CD8-positive, alpha-beta T cell (primary cell): ENCODE measurements at regions of chrX and their contacts with region 1.

Region 1: DNA sequence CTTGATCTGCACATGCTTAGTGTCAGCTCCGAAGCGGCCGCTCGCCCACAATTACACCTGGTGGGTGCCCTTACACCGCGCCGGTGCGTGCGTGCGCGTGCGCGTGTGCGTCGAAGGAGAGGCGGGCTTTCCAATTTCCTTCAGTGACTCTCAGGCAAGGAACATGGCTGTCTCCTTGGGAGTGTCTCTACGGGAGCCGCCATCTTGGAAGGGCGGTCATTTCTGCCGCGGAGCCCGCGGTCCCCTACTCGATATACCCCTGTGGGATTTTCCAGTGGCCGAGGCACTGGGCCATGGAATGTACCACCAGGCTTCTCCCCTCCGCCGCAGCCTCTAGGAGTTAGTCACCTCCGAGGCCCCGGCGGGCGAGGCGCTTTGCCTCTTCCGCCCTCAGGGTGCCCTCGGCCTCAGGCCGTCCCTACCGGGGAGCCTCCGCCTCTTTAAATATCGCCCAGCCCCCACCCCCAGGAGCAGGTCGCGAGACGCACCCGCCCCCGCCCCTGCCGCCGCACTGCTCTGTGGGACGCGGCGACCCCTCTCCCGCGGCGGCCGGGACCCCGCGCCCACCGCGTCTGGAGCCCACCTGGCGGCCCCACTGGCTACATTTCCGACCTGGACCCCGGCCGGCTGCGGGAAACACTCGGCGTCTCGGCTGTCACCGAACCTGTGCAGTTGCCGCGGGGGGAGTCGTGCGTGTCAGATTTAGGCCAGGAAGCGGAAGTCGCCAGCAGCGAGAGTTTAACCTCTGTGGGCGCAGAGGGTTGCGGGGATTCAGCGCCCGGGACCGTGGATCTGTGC is at the start of gene ZNF41:
- DNase-seq: peak; percentile 60 to 92 (median 79)
- ATAC-seq: peak; percentile 83
- H3K4me3 ChIP-seq: peak within 1 kb of the TSS; percentile 81 to 86
- H3K4me3 Mint-ChIP-seq: peak within 1 kb of the TSS; percentile 94
- H3K27ac ChIP-seq: peak within 1 kb of the TSS; percentile 81 to 88
- H3K27ac Mint-ChIP-seq: peak within 1 kb of the TSS; percentile 99
- H3K4me1 ChIP-seq: peaks cover 18% of the 10 kb centered on the region
- H3K4me1 Mint-ChIP-seq: peaks cover 42% of the 10 kb centered on the region
- H3K27me3 ChIP-seq: no peaks in the 10 kb centered on the region
- H3K27me3 Mint-ChIP-seq: no peaks in the 10 kb centered on the region
- CTCF ChIP-seq: no peak
- total RNA-seq, gene ZNF41: 2.9 to 4.9 TPM

Region 2: GRCh38 chrX:47129157-47129898 is 353.4 kb before region 1 on chrX:
- CTCF ChIA-PET with region 1: no interaction called
- POLR2A ChIA-PET with region 1: no interaction called
- intact Hi-C with region 1: loop called in 1 of 2 experiments (anchors 2 kb)
- DNase-seq: peak; percentile 76 to 95 (median 86)
- ATAC-seq: peak; percentile 98
- H3K4me3 ChIP-seq: peak overlapping the region; percentile 74 to 80
- H3K4me3 Mint-ChIP-seq: peak overlapping the region; percentile 97
- H3K27ac ChIP-seq: peak overlapping the region; percentile 73 to 85
- H3K27ac Mint-ChIP-seq: peak overlapping the region; percentile 98
- H3K4me1 ChIP-seq: no peaks in the 10 kb centered on the region
- H3K4me1 Mint-ChIP-seq: peaks cover 4% of the 10 kb centered on the region
- H3K27me3 ChIP-seq: no peaks in the 10 kb centered on the region
- H3K27me3 Mint-ChIP-seq: no peaks in the 10 kb centered on the region
- CTCF ChIP-seq: no peak

Region 3: DNA sequence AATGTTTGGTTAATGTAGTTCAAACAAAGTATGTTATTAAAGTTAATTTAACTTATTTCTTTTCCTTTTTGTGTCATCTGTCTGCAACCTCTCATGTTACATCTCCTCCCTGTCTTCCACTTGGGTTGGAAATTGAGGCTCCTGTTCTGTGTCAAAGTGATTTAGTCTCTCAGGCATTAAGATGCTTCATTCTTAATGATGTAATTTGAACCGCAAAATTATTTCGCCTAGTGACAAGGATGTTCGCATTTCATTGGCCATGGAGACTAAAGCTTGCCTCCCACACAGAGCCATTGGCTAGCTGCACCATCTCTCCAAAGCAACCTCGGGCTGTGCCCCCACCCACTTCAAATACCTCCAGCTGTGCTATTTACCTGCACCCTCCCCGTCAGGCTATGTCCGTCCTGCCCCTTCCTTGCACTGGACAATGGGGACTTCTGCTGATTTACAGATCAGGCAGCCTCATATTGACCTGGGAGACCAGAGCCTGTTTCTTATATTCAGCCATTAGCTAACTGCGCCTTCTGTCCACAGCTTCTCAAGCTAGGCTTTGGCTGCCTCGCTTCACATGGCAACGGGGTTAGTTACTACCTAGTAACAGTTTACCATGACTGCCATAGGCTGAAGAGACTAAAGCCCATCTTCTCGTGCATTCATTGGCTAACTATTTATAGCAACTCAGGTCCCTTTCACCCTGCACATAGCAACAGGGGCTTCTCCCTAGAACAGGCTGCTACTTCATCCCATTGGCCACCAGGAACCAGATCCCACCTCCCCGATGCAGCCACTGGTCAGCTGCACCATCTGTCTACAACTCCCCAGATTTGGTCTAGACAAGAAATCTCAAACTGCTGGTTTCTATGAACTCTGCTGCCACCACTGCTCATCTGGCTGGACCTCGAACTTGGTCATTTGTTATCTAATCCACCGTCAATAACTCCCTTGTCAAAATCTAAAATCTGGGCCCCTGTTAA is 120.9 kb before region 1 on chrX:
- CTCF ChIA-PET with region 1: no interaction called
- POLR2A ChIA-PET with region 1: interaction called, 3 read pairs
- intact Hi-C with region 1: loop called in 1 of 2 experiments (anchors 1 kb)
- DNase-seq: peak in 8 of 9 experiments; percentile 5 to 83 (median 28)
- ATAC-seq: peak; percentile 55
- H3K4me3 ChIP-seq: peak overlapping the region in 1 of 2 experiments; percentile 20
- H3K4me3 Mint-ChIP-seq: peak overlapping the region; percentile 58
- H3K27ac ChIP-seq: peak overlapping the region in 1 of 2 experiments; percentile 83
- H3K27ac Mint-ChIP-seq: peak overlapping the region; percentile 85
- H3K4me1 ChIP-seq: peaks cover 20% of the 10 kb centered on the region
- H3K4me1 Mint-ChIP-seq: peaks cover 33% of the 10 kb centered on the region
- H3K27me3 ChIP-seq: no peaks in the 10 kb centered on the region
- H3K27me3 Mint-ChIP-seq: no peaks in the 10 kb centered on the region
- CTCF ChIP-seq: no peak

Region 4: DNA sequence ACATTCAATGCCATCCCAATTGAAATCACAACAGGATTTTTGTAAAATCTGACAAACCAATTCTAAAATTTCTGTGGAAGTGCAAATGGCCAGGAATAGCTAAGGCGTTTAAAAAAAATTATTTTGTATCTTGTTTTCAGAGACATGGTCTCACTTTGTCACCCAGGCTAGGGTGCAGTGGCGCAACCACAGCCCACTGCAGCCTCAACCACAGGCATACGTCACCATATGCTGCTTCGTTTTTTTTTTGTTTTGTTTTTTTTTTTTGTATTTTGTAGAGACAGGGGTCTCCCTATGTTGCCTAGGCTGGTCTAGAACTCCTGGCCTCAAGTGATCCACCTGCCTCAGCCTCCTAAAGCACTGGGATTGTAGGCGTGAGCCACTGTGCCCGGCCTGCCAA is 24.2 kb before region 1 on chrX:
- CTCF ChIA-PET with region 1: no interaction called
- POLR2A ChIA-PET with region 1: no interaction called
- intact Hi-C with region 1: loop called in 1 of 2 experiments (anchors 1 kb)
- DNase-seq: peak in 6 of 9 experiments; percentile 14 to 74 (median 53)
- ATAC-seq: peak; percentile 81
- H3K4me3 ChIP-seq: no peak overlapping the region
- H3K4me3 Mint-ChIP-seq: no peak overlapping the region
- H3K27ac ChIP-seq: peak overlapping the region in 1 of 2 experiments; percentile 27
- H3K27ac Mint-ChIP-seq: peak overlapping the region; percentile 88
- H3K4me1 ChIP-seq: peaks cover 6% of the 10 kb centered on the region
- H3K4me1 Mint-ChIP-seq: peaks cover 15% of the 10 kb centered on the region
- H3K27me3 ChIP-seq: no peaks in the 10 kb centered on the region
- H3K27me3 Mint-ChIP-seq: no peaks in the 10 kb centered on the region
- CTCF ChIP-seq: no peak

Region 5: DNA sequence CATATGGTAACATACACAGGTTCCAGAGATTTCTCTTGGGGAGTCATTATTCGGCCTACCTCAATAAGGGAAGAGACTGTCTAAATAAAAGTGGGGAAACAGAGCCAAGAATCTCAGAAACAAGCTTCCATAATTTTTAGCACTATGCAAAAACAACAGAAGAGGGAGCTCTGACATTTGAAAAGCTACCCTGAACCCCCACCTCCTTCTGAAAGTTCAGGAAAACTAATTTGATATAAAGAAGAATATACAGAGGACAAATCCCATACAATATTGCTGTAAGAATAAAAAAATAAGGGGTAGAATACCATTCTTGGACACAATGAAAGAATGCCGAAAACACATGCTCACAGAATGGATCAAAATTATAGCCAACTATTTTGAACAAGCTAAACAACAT is 14.6 kb after region 1 on chrX:
- CTCF ChIA-PET with region 1: no interaction called
- POLR2A ChIA-PET with region 1: no interaction called
- intact Hi-C with region 1: no loop called
- DNase-seq: peak in 2 of 9 experiments; percentile 12 to 29
- ATAC-seq: no peak
- H3K4me3 ChIP-seq: no peak overlapping the region
- H3K4me3 Mint-ChIP-seq: no peak overlapping the region
- H3K27ac ChIP-seq: no peak overlapping the region
- H3K27ac Mint-ChIP-seq: no peak overlapping the region
- H3K4me1 ChIP-seq: no peaks in the 10 kb centered on the region
- H3K4me1 Mint-ChIP-seq: peaks cover 3% of the 10 kb centered on the region
- H3K27me3 ChIP-seq: no peaks in the 10 kb centered on the region
- H3K27me3 Mint-ChIP-seq: no peaks in the 10 kb centered on the region
- CTCF ChIP-seq: no peak

Region 6: GRCh38 chrX:47523297-47523696 is 40.6 kb after region 1 on chrX:
- CTCF ChIA-PET with region 1: no interaction called
- POLR2A ChIA-PET with region 1: no interaction called
- intact Hi-C with region 1: loop called (anchors 5 kb)
- DNase-seq: peak; percentile 53 to 90 (median 78)
- ATAC-seq: peak; percentile 97
- H3K4me3 ChIP-seq: peak overlapping the region; percentile 47 to 49
- H3K4me3 Mint-ChIP-seq: peak overlapping the region; percentile 69
- H3K27ac ChIP-seq: no peak overlapping the region
- H3K27ac Mint-ChIP-seq: no peak overlapping the region
- H3K4me1 ChIP-seq: no peaks in the 10 kb centered on the region
- H3K4me1 Mint-ChIP-seq: peaks cover 5% of the 10 kb centered on the region
- H3K27me3 ChIP-seq: no peaks in the 10 kb centered on the region
- H3K27me3 Mint-ChIP-seq: no peaks in the 10 kb centered on the region
- CTCF ChIP-seq: peak; percentile 72

Region 7: GRCh38 chrX:47650164-47651042 is 167.7 kb after region 1 on chrX and contains the start of gene ELK1:
- CTCF ChIA-PET with region 1: no interaction called
- POLR2A ChIA-PET with region 1: no interaction called
- intact Hi-C with region 1: loop called in 1 of 2 experiments (anchors 5 kb)
- DNase-seq: peak; percentile 75 to 96 (median 87)
- ATAC-seq: peak; percentile 89
- H3K4me3 ChIP-seq: peak within 1 kb of the TSS; percentile 63 to 69
- H3K4me3 Mint-ChIP-seq: peak within 1 kb of the TSS; percentile 91
- H3K27ac ChIP-seq: peak within 1 kb of the TSS; percentile 61 to 70
- H3K27ac Mint-ChIP-seq: peak within 1 kb of the TSS; percentile 93
- H3K4me1 ChIP-seq: peaks cover 25% of the 10 kb centered on the region
- H3K4me1 Mint-ChIP-seq: peaks cover 44% of the 10 kb centered on the region
- H3K27me3 ChIP-seq: no peaks in the 10 kb centered on the region
- H3K27me3 Mint-ChIP-seq: no peaks in the 10 kb centered on the region
- CTCF ChIP-seq: no peak
- total RNA-seq, gene ELK1: 33.6 to 41.2 TPM

Region 8: DNA sequence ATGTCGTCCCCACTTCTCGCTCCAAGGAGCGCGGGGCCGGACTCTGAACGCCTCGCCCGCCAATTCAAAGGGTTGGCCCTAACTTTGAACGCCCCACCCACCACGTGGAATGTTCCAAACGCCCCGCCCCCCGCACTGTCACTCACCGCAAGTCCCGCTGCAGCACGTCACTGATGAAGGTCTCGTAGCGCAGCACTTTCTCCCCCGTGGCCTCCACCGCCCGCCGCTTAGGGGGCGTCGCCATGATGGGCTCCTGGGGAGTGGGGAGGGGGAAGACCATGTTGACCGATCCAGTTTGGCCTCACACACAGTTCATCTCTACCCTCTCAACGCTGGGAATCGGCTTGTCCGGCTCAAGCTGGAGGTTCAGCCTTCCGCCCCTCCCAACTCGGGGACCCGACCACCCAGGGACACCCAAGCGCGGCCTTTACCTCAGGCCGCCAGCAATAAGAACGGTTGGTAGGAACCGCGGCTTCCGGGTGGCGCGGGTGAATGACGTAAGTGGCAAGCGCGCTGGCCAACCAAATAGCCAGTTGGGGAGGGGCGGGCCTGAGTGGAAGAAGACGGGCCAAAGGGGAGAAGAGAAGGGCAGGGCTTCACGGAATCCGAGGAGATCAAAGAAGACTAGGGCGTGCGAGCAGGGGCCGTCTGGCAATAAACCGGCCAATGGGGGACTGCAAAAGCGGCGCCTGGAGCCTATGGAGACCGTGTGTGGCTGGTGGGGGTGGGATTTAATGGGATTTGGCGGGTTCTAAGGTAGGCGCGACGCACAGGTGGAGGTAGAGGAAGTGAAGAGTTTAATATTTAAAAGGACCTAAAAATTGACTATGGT is 176.2 kb after region 1 on chrX and contains the start of gene UXT:
- CTCF ChIA-PET with region 1: no interaction called
- POLR2A ChIA-PET with region 1: no interaction called
- intact Hi-C with region 1: loop called (anchors 2 to 5 kb)
- DNase-seq: peak; percentile 80 to 95 (median 91)
- ATAC-seq: peak; percentile 81
- H3K4me3 ChIP-seq: peak within 1 kb of the TSS; percentile 86 to 92
- H3K4me3 Mint-ChIP-seq: peak within 1 kb of the TSS; percentile 90
- H3K27ac ChIP-seq: peak within 1 kb of the TSS; percentile 100
- H3K27ac Mint-ChIP-seq: peak within 1 kb of the TSS; percentile 99
- H3K4me1 ChIP-seq: peaks cover 16% of the 10 kb centered on the region
- H3K4me1 Mint-ChIP-seq: peaks cover 15% of the 10 kb centered on the region
- H3K27me3 ChIP-seq: no peaks in the 10 kb centered on the region
- H3K27me3 Mint-ChIP-seq: no peaks in the 10 kb centered on the region
- CTCF ChIP-seq: no peak
- total RNA-seq, gene UXT: 202 TPM